Breast epithelium (tissue), 4 donors: ENCODE measurements at regions of chr5 and their contacts with region 1.

Region 1: DNA sequence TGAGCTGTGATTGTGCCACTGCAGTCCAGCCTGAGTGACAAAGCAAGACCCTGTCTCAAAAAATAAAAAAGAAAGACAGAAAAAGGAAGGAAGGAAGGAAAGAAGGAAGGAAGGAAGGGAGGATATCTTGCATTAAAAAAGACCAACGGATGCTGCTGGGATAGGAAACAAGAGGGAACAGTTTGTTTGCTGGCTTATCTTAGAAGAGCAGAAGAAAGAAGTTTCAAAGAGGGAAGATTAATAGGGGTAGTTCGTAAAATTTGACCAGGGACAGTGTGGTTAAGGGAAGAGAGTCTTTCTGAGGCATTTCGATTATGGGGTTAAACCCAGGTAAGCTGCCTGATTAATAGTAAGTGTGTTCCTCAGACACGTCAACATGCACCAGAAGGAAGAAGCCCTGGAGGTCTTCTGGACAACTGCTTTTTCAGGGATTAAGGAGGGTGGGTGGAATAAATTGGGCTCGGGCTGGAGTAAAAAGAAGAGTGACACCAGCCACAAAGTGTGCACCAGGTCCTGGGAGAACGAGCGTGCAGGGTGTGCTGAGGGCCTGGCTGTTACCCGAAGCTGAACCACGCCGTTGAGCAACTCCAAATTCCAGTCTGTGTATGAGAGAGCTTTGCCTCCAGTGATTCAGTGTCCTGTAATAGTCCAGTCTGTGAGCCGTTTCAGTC is 24.8 kb downstream of the FYB1 start:
- DNase-seq: no peak
- H3K4me3 ChIP-seq: no peak overlapping the region
- H3K27ac ChIP-seq: no peak overlapping the region
- H3K4me1 ChIP-seq: no peaks in the 10 kb centered on the region
- H3K27me3 ChIP-seq: no peaks in the 10 kb centered on the region
- CTCF ChIP-seq: no peak
- POLR2A ChIP-seq: no peak

Region 2: DNA sequence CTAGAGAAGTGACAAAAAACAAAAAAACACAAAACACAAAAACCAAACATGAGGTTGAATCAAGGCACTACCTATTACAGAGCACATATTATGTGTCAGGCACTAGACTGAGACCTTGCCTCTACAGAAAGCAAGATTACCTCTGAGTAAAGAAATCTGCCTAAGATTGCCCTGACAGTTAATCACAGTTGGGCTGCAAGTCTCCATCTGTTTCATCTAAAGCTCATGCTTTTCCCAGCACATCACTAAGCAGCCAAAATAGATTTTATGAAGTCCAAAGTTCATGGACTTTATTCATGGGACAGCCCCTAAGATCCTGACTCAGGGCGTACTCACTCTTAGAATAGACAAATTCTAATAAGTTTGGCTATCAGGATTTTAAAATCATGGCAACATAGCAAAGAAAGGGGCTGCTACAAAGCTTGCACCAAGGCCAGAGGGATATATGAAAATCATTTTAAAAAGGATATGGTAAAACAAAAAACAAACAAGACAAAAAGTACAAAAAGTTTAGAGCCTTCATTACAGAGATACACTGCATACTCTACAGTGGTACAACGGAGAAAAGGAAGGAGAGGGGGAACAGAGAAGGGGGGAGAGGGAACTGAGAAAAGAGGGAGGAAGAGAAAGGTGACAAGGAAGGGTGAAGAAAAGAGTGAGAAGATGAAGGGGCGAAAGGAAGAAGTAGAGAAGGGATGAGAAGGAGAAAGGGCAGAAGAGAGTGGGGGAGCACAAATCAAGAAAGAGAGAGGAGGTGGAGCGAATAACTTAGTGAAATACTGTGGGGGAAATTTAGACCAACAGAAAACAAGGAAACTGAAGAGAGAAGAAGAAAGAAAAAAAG is 178.6 kb before region 1 on chr5:
- intact Hi-C with region 1: loop called (anchors 5 kb)
- DNase-seq: no peak
- H3K4me3 ChIP-seq: no peak overlapping the region
- H3K27ac ChIP-seq: peak overlapping the region; percentile 27 to 46
- H3K4me1 ChIP-seq: no peaks in the 10 kb centered on the region
- H3K27me3 ChIP-seq: no peaks in the 10 kb centered on the region
- CTCF ChIP-seq: no peak
- POLR2A ChIP-seq: no peak

Region 3: DNA sequence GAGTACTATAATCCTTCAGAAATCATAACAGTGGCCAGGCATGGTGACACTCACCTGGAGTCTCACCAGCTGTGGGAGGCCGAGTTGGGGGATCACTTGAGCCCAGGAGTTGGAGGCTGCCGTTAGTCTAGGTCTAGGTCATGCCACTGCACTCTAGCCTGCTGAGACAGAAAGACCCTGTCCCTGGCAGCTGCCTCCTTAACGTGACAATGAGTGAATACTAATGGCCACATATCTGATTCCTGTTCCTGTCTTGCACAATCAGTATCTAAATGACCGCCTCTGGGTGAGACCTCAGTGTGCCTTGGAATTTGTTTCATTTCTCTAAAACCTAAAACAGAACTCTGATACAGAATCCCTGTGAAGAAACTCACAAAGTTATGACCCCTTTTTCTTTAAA is 361.2 kb after region 1 on chr5:
- intact Hi-C with region 1: no loop called
- DNase-seq: no peak
- H3K4me3 ChIP-seq: no peak overlapping the region
- H3K27ac ChIP-seq: no peak overlapping the region
- H3K4me1 ChIP-seq: no peaks in the 10 kb centered on the region
- H3K27me3 ChIP-seq: no peaks in the 10 kb centered on the region
- CTCF ChIP-seq: no peak
- POLR2A ChIP-seq: no peak